ENCODE measurements at regions of chr14 and their contacts with region 1.

Region 1: DNA sequence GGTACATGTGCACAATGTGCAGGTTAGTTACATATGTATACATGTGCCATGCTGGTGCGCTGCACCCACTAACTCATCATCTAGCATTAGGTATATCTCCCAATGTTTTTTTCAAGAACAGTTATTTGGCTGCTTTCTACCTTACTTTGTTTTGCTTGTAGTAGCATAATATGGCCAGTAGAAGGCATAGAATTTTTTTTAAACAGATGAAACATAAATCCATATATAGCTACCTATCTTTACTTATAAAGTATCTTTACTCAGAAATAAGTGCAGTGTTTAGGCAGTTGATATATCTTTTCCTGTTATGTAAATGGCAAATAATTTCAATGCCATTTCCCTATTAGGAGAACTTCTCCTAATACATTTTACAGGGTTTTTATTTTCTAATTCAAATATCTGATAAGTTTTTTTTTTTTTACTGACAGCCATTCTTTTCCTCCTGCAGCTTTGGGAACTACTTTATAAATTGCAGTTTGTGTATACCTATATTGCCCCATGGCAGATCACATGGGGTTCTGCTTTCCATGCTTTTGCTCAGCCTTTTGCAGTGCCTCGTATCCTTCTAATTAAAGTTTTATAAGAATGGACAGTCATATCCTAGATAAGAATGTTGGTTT is 143.1 kb downstream of the PCNX1 start:
- DNase-seq: no peak
- H3K4me3 Mint-ChIP-seq: no peak overlapping the region
- H3K27ac Mint-ChIP-seq: no peak overlapping the region
- H3K4me1 Mint-ChIP-seq: no peaks in the 10 kb centered on the region
- H3K27me3 Mint-ChIP-seq: no peaks in the 10 kb centered on the region

Region 2: DNA sequence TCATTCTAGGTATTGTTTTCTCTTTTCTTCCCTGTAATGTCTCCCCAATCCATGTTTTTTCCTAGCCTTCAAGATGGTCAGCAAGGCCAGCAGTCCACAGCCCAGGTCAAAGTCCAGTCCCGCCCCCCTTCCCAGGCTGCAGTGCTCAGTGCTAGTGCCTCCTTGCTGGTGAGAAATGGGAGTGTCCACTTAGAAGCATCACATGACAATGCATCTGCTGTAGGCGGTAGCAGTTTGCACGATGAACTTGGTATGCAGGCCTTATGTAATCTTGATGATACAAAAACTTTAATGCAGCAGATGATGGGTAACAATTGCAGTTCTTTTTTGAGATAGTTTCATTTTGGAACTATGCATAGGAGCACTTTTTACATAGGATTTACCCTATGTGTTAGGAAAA is 54.6 kb before region 1 on chr14:
- intact Hi-C with region 1: no loop called
- DNase-seq: no peak
- H3K4me3 Mint-ChIP-seq: no peak overlapping the region
- H3K27ac Mint-ChIP-seq: no peak overlapping the region
- H3K4me1 Mint-ChIP-seq: peaks cover 24% of the 10 kb centered on the region
- H3K27me3 Mint-ChIP-seq: no peaks in the 10 kb centered on the region

Region 3: GRCh38 chr14:71753126-71753830 is 703.0 kb after region 1 on chr14:
- intact Hi-C with region 1: loop called (anchors 1 kb)
- DNase-seq: peak; percentile 34
- H3K4me3 Mint-ChIP-seq: peak overlapping the region; percentile 19
- H3K27ac Mint-ChIP-seq: no peak overlapping the region
- H3K4me1 Mint-ChIP-seq: peaks cover 18% of the 10 kb centered on the region
- H3K27me3 Mint-ChIP-seq: peaks cover 12% of the 10 kb centered on the region

Measured in activated T-helper 1 cell treated with anti-CD3 and anti-CD28 coated beads, Interleukin-12 subunit alpha, Interleukin-12 subunit beta, Interleukin-2, Interleukin-4 antibody, amounts not matched to agents 30 ng/mL and 10 ng/mL and 1 ng/mL, durations not matched to agents 14 hours and 24 hours and 36 hours (primary cell).